AG04450 (cell line): ENCODE measurements at regions of chr12 and their contacts with region 1.

Region 1: GRCh38 chr12:12636641-12637040 is 25.0 kb downstream of the CREBL2 start:
- DNase-seq: no peak
- H3K4me3 ChIP-seq: no peak overlapping the region
- H3K27ac ChIP-seq: no peak overlapping the region
- H3K27me3 ChIP-seq: no peaks in the 10 kb centered on the region
- CTCF ChIP-seq: no peak

Region 2: GRCh38 chr12:12654691-12655460 is 18.2 kb after region 1 on chr12:
- CTCF ChIA-PET with region 1: interaction called, 14 read pairs
- POLR2A ChIA-PET with region 1: no interaction called
- DNase-seq: no peak
- H3K4me3 ChIP-seq: no peak overlapping the region
- H3K27ac ChIP-seq: no peak overlapping the region
- H3K27me3 ChIP-seq: no peaks in the 10 kb centered on the region
- CTCF ChIP-seq: no peak